Calu3 (cell line): ENCODE measurements at regions of chr1 and their contacts with region 1.

Region 1: GRCh38 chr1:178300352-178300699 is 196.4 kb downstream of the CLEC20A start:
- DNase-seq: no peak
- H3K4me3 Mint-ChIP-seq: no peak overlapping the region
- H3K27ac Mint-ChIP-seq: peak overlapping the region; percentile 32
- H3K4me1 Mint-ChIP-seq: peaks cover 32% of the 10 kb centered on the region
- H3K27me3 Mint-ChIP-seq: no peaks in the 10 kb centered on the region
- CTCF ChIP-seq: no peak

Region 2: DNA sequence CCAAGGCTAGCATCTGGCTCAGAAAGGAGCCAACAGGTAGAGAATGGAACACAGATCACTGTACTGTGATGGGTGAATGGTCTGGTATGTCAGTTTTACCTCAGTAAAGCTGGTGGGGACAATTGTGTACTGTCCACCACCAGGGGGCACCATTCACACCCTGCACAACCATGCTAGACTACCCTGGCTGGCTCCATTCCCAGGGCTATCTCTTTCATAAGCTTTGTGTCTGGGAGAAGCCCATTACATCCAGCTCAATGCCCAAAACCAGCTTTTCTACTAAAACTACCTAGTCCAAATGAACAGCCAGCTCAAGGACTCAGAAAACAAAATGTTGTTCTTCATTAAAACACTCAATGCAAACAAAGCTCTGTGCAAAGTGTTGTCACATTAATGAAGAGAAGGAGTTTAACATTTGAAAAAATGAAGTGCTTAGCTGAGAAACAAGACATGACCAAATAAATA is 268.4 kb before region 1 on chr1:
- CTCF ChIA-PET with region 1: interaction called, 13 read pairs
- intact Hi-C with region 1: no loop called
- DNase-seq: peak; percentile 92
- H3K4me3 Mint-ChIP-seq: no peak overlapping the region
- H3K27ac Mint-ChIP-seq: no peak overlapping the region
- H3K4me1 Mint-ChIP-seq: peaks cover 15% of the 10 kb centered on the region
- H3K27me3 Mint-ChIP-seq: no peaks in the 10 kb centered on the region
- CTCF ChIP-seq: peak; percentile 85

Region 3: DNA sequence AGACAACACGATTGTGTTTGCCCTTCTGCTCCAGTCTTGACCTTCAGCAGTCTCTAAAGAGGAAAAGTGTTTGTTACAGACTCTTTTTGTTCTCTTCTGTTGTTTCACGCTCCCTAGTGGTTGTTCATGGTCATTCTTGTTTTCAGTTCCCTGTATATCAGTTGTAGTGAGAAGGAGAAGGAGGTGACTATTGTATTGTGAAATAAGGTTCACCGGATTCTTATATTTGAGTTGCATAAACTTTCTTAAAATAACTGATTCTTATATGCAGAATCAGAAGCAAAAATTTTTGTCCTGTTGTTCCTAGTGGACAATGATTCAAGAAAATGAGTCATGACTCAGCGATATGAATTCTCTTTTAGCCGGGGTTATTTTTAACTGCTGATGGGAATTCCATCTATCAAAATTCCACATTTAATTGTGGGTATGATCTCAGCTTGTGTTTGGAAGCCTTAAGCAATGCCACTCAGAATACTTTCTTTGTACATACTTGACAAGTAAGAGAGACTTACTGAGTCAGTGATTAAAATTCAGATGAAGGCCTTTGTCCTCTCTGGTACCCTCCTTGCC is 44.3 kb after region 1 on chr1:
- CTCF ChIA-PET with region 1: interaction called, 12 read pairs
- intact Hi-C with region 1: no loop called
- DNase-seq: peak; percentile 41
- H3K4me3 Mint-ChIP-seq: no peak overlapping the region
- H3K27ac Mint-ChIP-seq: peak overlapping the region; percentile 84
- H3K4me1 Mint-ChIP-seq: peaks cover 46% of the 10 kb centered on the region
- H3K27me3 Mint-ChIP-seq: no peaks in the 10 kb centered on the region
- CTCF ChIP-seq: peak; percentile 69

Region 4: GRCh38 chr1:178501705-178502329 is 201.5 kb after region 1 on chr1:
- CTCF ChIA-PET with region 1: interaction called, 13 read pairs
- intact Hi-C with region 1: loop called (anchors 2 kb)
- DNase-seq: peak; percentile 92
- H3K4me3 Mint-ChIP-seq: no peak overlapping the region
- H3K27ac Mint-ChIP-seq: no peak overlapping the region
- H3K4me1 Mint-ChIP-seq: peaks cover 8% of the 10 kb centered on the region
- H3K27me3 Mint-ChIP-seq: peaks cover 11% of the 10 kb centered on the region
- CTCF ChIP-seq: peak; percentile 96